ENCODE measurements at regions of chr12 and their contacts with region 1.

Region 1: DNA sequence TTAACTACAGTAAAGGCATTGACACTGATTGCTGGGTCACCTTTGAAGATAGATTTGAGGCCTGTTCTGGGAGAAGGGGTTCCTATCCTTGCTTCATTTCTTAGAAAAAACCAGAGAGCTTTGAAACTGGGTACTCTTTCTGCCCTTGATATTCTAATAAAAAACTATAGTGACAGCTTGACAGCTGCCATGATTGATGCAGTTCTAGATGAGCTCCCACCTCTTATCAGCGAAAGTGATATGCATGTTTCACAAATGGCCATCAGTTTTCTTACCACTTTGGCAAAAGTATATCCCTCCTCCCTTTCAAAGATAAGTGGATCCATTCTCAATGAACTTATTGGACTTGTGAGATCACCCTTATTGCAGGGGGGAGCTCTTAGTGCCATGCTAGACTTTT is 36.4 kb downstream of the CAND1 start:
- DNase-seq: no peak
- ATAC-seq: no peak
- H3K4me3 ChIP-seq: no peak overlapping the region
- H3K27ac ChIP-seq: no peak overlapping the region
- H3K4me1 ChIP-seq: no peaks in the 10 kb centered on the region
- H3K27me3 ChIP-seq: no peaks in the 10 kb centered on the region
- CTCF ChIP-seq: no peak
- EP300 ChIP-seq: no peak
- POLR2A ChIP-seq: no peak
- RAD21 ChIP-seq: no peak

Region 2: GRCh38 chr12:67288561-67288960 is 17.0 kb before region 1 on chr12:
- CTCF ChIA-PET with region 1: interaction called, 6 read pairs
- POLR2A ChIA-PET with region 1: no interaction called
- RAD21 ChIA-PET with region 1: interaction called, 3 read pairs
- SMC1A ChIA-PET with region 1: interaction called, 14 read pairs
- in situ Hi-C with region 1: no loop called
- intact Hi-C with region 1: no loop called
- DNase-seq: no peak
- ATAC-seq: peak; percentile 24; the same call in 1 of the 3 replicates
- H3K4me3 ChIP-seq: no peak overlapping the region
- H3K27ac ChIP-seq: no peak overlapping the region
- H3K4me1 ChIP-seq: no peaks in the 10 kb centered on the region
- H3K27me3 ChIP-seq: no peaks in the 10 kb centered on the region
- CTCF ChIP-seq: no peak
- EP300 ChIP-seq: no peak
- POLR2A ChIP-seq: no peak
- RAD21 ChIP-seq: no peak

Region 3: GRCh38 chr12:67331123-67331522 is 25.6 kb after region 1 on chr12:
- CTCF ChIA-PET with region 1: no interaction called
- POLR2A ChIA-PET with region 1: no interaction called
- RAD21 ChIA-PET with region 1: no interaction called
- SMC1A ChIA-PET with region 1: no interaction called
- in situ Hi-C with region 1: no loop called
- intact Hi-C with region 1: no loop called
- DNase-seq: no peak
- ATAC-seq: peak; percentile 57
- H3K4me3 ChIP-seq: no peak overlapping the region
- H3K27ac ChIP-seq: no peak overlapping the region
- H3K4me1 ChIP-seq: no peaks in the 10 kb centered on the region
- H3K27me3 ChIP-seq: no peaks in the 10 kb centered on the region
- CTCF ChIP-seq: no peak
- EP300 ChIP-seq: no peak
- POLR2A ChIP-seq: no peak
- RAD21 ChIP-seq: no peak

Region 4: GRCh38 chr12:68020699-68021098 is 715.2 kb after region 1 on chr12:
- CTCF ChIA-PET with region 1: no interaction called
- POLR2A ChIA-PET with region 1: no interaction called
- RAD21 ChIA-PET with region 1: no interaction called
- SMC1A ChIA-PET with region 1: no interaction called
- in situ Hi-C with region 1: no loop called
- intact Hi-C with region 1: no loop called
- DNase-seq: no peak
- ATAC-seq: no peak
- H3K4me3 ChIP-seq: no peak overlapping the region
- H3K27ac ChIP-seq: no peak overlapping the region
- H3K4me1 ChIP-seq: no peaks in the 10 kb centered on the region
- H3K27me3 ChIP-seq: no peaks in the 10 kb centered on the region
- CTCF ChIP-seq: no peak
- EP300 ChIP-seq: no peak
- POLR2A ChIP-seq: no peak
- RAD21 ChIP-seq: no peak

Measured in GM12878 (cell line).